ENCODE measurements at regions of chr5 and their contacts with region 1.

Region 1: DNA sequence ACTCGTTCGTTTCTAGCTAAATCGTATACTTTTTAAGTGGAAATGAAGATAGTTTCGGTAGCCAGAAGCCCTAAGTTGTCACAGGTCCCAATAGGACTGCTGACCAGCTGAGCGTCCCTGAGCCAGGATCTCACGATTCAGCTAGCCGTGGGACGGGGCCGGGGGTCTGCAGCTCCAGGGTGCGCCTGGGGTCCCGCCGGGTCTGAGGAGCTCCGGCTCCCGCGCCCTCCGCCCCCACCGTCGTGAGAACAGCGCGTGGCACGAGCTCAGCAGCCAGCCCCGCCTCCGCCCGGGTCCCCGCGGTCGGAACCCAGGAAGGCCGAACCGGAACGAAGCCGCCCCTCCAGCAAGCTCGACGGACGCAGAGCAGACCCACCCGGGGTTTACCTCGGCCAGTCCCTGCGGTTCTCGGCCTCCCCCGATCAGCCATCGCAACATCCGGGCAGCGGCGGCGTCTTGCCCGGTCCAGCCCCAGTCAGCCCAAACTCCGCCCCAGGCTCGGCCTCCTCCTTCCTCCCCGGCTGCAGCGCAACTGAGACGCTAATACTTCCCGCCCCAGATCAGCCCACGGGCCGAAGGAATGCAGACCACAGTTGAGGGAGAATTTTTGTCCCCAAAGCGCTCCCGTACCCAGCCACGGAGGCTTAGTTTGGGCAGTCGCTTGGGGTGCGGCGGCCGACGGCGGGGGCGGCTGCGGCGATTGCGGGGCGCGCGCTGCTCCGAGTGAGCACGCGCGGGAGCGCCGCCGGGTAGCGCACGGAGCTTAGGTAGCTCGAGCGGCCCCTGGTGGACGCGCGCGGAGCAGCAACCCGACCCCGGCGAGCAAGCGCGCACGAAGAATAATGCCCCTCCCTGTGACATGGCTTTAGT is at the start of gene WDR41:
- DNase-seq: peak; percentile 94 to 95
- H3K4me3 ChIP-seq: peak within 1 kb of the TSS; percentile 57 to 87 (median 72)
- H3K27ac ChIP-seq: peak within 1 kb of the TSS; percentile 92 to 96 (median 94)
- H3K4me1 ChIP-seq: peaks cover 10 to 23% of the 10 kb centered on the region in 2 donors
- H3K27me3 ChIP-seq: no peaks in the 10 kb centered on the region
- CTCF ChIP-seq: peak; percentile 67 to 98 (median 94)
- POLR2A ChIP-seq: peak in 1 of 2 donors; percentile 91
- total RNA-seq, gene WDR41: 63.9 to 93.9 (median 85.0) TPM

Region 2: DNA sequence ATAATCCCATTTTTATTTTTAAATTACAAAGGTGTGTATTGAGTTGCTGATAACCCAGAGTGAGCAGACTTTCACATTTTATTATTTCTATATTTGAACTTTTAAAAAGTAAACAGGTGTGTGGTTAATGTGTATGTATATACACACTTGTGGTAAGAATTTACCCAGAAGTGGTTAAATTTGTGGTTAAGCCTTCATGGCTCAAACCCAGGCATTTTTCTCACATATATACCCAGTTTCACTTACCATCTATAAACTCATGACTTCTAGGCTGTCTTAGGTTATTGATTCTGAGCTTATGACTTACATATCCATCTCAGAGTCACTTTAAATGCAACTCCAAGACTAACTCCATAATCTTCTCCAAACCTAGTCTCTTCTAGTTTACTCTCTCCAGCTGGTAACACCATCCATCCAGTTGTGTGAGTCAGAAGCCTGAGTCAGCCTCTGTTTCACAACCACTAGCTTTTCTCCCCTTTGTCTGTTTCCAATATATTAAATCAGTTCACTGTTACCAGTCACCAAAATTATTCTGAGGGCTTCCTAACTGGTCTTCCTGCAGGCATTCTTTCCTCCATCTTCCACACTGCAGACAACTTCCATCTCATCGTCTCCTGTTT is 425.1 kb before region 1 on chr5:
- intact Hi-C with region 1: loop called (anchors 10 kb)
- DNase-seq: no peak
- H3K4me3 ChIP-seq: no peak overlapping the region
- H3K27ac ChIP-seq: no peak overlapping the region
- H3K4me1 ChIP-seq: no peaks in the 10 kb centered on the region
- H3K27me3 ChIP-seq: no peaks in the 10 kb centered on the region
- CTCF ChIP-seq: no peak
- POLR2A ChIP-seq: no peak

Region 3: DNA sequence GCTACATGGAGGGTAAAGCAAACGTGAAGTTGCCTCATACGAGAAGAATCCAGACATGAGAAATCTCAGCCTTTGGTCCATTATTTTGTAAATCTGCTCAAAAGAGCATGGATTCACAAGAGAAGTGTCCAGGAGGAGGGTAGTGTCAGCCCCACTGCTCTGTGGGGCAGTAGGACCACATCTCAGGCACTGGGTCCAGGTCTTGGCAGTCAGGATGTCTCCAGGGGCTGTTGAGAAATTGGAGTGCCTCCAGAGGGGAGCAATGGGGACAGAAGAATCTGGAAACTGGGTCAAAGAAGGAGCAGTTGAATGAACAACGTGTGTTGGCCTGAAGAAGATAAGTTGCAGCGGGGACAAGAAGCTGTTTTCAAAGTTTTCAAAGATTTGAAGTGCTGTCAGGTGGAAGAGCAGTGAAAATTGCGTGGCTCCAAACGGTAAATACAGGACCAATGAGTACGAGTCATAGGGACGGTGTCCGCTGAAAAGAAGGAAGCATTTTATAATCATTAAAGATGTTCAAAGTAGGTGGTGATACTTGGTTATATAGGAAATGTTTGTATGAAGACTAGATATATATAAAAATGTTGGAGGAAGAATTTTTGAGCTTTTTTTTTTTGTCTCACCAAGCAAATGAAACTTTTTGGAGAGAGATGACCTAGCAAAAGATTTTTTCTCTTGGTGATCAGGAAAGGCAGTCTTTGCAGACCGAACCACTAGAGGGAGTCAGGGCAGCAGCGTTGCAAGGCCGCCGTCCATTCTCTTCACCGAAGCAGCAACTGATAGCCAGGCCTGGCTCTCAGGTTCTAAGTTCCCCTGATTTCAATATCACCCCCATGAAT is 347.8 kb before region 1 on chr5:
- intact Hi-C with region 1: loop called (anchors 10 kb)
- DNase-seq: peak; percentile 83 to 84
- H3K4me3 ChIP-seq: no peak overlapping the region
- H3K27ac ChIP-seq: peak overlapping the region; percentile 0 to 46 (median 17)
- H3K4me1 ChIP-seq: peaks cover 2 to 17% of the 10 kb centered on the region in 2 donors
- H3K27me3 ChIP-seq: no peaks in the 10 kb centered on the region
- CTCF ChIP-seq: peak; percentile 68 to 85 (median 76)
- POLR2A ChIP-seq: no peak

Region 4: GRCh38 chr5:77816671-77817070 is 324.7 kb after region 1 on chr5:
- intact Hi-C with region 1: no loop called
- DNase-seq: no peak
- H3K4me3 ChIP-seq: no peak overlapping the region
- H3K27ac ChIP-seq: no peak overlapping the region
- H3K4me1 ChIP-seq: no peaks in the 10 kb centered on the region
- H3K27me3 ChIP-seq: no peaks in the 10 kb centered on the region
- CTCF ChIP-seq: no peak
- POLR2A ChIP-seq: no peak

Measured in thyroid gland (tissue), 4 donors.